CD8-positive, alpha-beta memory T cell (primary cell): ENCODE measurements at regions of chr14 and their contacts with region 1.

Region 1: GRCh38 chr14:49585803-49586672 is at the start of gene RPS29:
- DNase-seq: peak; percentile 94 to 99 (median 99)
- H3K4me3 ChIP-seq: peak within 1 kb of the TSS; percentile 84
- H3K4me3 Mint-ChIP-seq: peak within 1 kb of the TSS; percentile 87 to 96 (median 92)
- H3K27ac ChIP-seq: peak within 1 kb of the TSS; percentile 97
- H3K27ac Mint-ChIP-seq: peak within 1 kb of the TSS; percentile 92 to 100 (median 98)
- H3K4me1 ChIP-seq: peaks cover 36% of the 10 kb centered on the region
- H3K4me1 Mint-ChIP-seq: peaks cover 51 to 61% (median 52%) of the 10 kb centered on the region in 3 donors
- H3K27me3 ChIP-seq: no peaks in the 10 kb centered on the region
- H3K27me3 Mint-ChIP-seq: peaks cover 0 to 9% of the 10 kb centered on the region in 2 donors
- total RNA-seq, gene RPS29: 1,908 to 2,102 TPM

Region 2: GRCh38 chr14:49461529-49462401 is 124.3 kb before region 1 on chr14:
- CTCF ChIA-PET with region 1: interaction called, 12 read pairs
- POLR2A ChIA-PET with region 1: no interaction called
- DNase-seq: peak; percentile 37 to 71 (median 57)
- H3K4me3 ChIP-seq: no peak overlapping the region
- H3K4me3 Mint-ChIP-seq: no peak overlapping the region
- H3K27ac ChIP-seq: no peak overlapping the region
- H3K27ac Mint-ChIP-seq: peak overlapping the region in 1 of 8 donors; percentile 21
- H3K4me1 ChIP-seq: no peaks in the 10 kb centered on the region
- H3K4me1 Mint-ChIP-seq: no peaks in the 10 kb centered on the region
- H3K27me3 ChIP-seq: no peaks in the 10 kb centered on the region
- H3K27me3 Mint-ChIP-seq: peaks cover 2 to 12% of the 10 kb centered on the region in 2 donors

Region 3: GRCh38 chr14:49545073-49545472 is 41.0 kb before region 1 on chr14:
- CTCF ChIA-PET with region 1: no interaction called
- POLR2A ChIA-PET with region 1: no interaction called
- DNase-seq: no peak
- H3K4me3 ChIP-seq: no peak overlapping the region
- H3K4me3 Mint-ChIP-seq: no peak overlapping the region
- H3K27ac ChIP-seq: no peak overlapping the region
- H3K27ac Mint-ChIP-seq: no peak overlapping the region
- H3K4me1 ChIP-seq: no peaks in the 10 kb centered on the region
- H3K4me1 Mint-ChIP-seq: no peaks in the 10 kb centered on the region
- H3K27me3 ChIP-seq: no peaks in the 10 kb centered on the region
- H3K27me3 Mint-ChIP-seq: peaks cover 2 to 6% of the 10 kb centered on the region in 2 donors

Region 4: DNA sequence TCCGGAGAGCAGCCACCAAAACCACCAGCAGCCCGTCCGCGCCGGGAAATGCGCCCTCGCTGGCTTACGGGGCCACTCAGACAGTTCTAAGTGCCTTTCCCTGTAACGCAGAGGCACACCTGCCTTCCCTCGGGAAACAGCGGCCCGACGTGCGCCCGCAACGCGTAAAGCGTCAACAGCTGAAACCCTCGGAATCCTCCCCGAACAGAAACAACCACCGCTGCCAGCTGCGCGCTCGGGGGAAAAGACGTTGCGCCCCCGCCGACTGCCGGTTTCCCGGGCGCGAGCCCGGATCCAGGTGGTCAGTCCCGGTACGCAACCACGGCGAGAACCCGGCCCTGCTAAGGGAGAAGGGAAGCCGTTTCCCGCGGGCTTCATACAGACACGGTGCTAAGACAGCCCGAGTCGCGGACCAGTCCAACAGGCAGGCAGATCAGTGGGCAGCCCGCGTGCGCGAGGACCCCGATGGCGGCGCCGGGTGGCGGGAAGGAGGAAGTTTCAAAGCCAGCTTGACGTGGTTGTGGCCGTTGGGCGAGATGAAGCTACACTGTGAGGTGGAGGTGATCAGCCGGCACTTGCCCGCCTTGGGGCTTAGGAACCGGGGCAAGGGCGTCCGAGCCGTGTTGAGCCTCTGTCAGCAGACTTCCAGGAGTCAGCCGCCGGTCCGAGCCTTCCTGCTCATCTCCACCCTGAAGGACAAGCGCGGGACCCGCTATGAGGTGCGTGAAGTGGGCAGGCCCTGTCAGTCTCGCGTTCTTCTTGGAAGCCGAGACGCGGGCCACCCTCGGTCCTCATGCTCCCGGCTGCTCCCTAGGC is 12.7 kb after region 1 on chr14 and contains the start of gene LRR1:
- CTCF ChIA-PET with region 1: interaction called, 26 read pairs
- POLR2A ChIA-PET with region 1: interaction called, 46 read pairs
- DNase-seq: peak; percentile 77 to 91 (median 88)
- H3K4me3 ChIP-seq: peak within 1 kb of the TSS; percentile 99
- H3K4me3 Mint-ChIP-seq: peak within 1 kb of the TSS; percentile 93 to 100 (median 97)
- H3K27ac ChIP-seq: peak within 1 kb of the TSS; percentile 94
- H3K27ac Mint-ChIP-seq: peak within 1 kb of the TSS; percentile 94 to 99 (median 97)
- H3K4me1 ChIP-seq: peaks cover 10% of the 10 kb centered on the region
- H3K4me1 Mint-ChIP-seq: peaks cover 23 to 50% (median 36%) of the 10 kb centered on the region in 3 donors
- H3K27me3 ChIP-seq: no peaks in the 10 kb centered on the region
- H3K27me3 Mint-ChIP-seq: no peaks in the 10 kb centered on the region
- total RNA-seq, gene LRR1: 51.1 to 52.2 TPM

Region 5: GRCh38 chr14:49620182-49621113 is 34.4 kb after region 1 on chr14 and contains the starts of genes MGAT2 and RPL36AL:
- CTCF ChIA-PET with region 1: interaction called, 44 read pairs
- POLR2A ChIA-PET with region 1: interaction called, 82 read pairs
- DNase-seq: peak; percentile 91 to 96 (median 96)
- H3K4me3 ChIP-seq: peak within 1 kb of the TSS; percentile 80
- H3K4me3 Mint-ChIP-seq: peak within 1 kb of the TSS; percentile 94 to 99 (median 98)
- H3K27ac ChIP-seq: peak within 1 kb of the TSS; percentile 99
- H3K27ac Mint-ChIP-seq: peak within 1 kb of the TSS; percentile 98 to 100 (median 100)
- H3K4me1 ChIP-seq: peaks cover 50% of the 10 kb centered on the region
- H3K4me1 Mint-ChIP-seq: peaks cover 57 to 68% (median 65%) of the 10 kb centered on the region in 3 donors
- H3K27me3 ChIP-seq: no peaks in the 10 kb centered on the region
- H3K27me3 Mint-ChIP-seq: no peaks in the 10 kb centered on the region
- total RNA-seq, gene MGAT2: 57.7 to 60.2 TPM
- total RNA-seq, gene RPL36AL: 236 to 273 TPM

Region 6: DNA sequence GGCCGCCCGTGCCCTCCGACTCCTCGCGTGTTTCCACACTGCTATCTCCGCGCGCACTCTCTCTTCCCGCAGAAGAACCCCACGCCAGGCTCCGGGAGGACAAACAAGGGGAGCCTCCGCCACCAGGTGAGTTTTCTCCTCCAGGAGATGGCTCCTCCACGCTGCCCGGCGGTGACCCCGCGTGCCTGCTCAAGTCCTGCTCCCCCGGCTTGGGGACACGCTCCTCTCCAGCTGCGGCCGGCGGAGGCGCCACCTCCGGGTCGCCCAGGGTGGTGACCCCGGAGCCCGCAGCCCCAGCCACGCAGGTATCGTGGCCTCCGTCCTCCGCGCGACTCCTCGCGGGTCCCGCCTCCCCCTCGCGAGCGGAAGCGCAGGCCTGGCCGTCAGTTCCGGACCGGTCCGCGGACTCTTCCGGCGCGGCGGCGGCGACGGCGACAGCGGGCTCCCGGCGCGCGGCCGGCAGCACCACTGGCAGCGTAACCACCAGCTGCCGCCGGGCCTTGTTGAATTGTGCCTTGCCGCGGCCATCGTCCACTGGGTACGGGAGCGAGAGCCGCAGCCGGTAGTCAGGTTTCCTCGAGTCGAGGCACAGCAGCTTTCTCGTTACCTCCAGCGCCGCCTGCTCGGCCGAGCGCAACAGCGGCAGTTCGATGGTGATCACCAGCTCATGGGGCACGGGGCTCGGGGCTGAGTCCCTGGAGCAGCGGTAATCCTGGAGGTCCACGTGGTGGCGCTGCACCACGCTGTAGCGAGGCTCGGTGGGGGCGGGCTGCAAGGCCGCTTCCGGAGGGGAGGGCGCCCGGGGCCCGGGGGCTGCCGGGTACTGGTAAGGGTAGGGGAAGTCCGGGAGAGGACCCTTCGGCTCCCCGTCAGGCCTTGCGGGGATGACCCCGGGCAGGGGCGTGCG is 47.9 kb after region 1 on chr14:
- CTCF ChIA-PET with region 1: interaction called, 32 read pairs
- POLR2A ChIA-PET with region 1: interaction called, 28 read pairs
- DNase-seq: peak; percentile 90 to 96 (median 94)
- H3K4me3 ChIP-seq: peak overlapping the region; percentile 96
- H3K4me3 Mint-ChIP-seq: peak overlapping the region; percentile 92 to 100 (median 95)
- H3K27ac ChIP-seq: peak overlapping the region; percentile 99
- H3K27ac Mint-ChIP-seq: peak overlapping the region; percentile 91 to 100 (median 95)
- H3K4me1 ChIP-seq: peaks cover 32% of the 10 kb centered on the region
- H3K4me1 Mint-ChIP-seq: peaks cover 47 to 78% (median 60%) of the 10 kb centered on the region in 3 donors
- H3K27me3 ChIP-seq: no peaks in the 10 kb centered on the region
- H3K27me3 Mint-ChIP-seq: peaks cover 0 to 1% of the 10 kb centered on the region in 2 donors

Region 7: DNA sequence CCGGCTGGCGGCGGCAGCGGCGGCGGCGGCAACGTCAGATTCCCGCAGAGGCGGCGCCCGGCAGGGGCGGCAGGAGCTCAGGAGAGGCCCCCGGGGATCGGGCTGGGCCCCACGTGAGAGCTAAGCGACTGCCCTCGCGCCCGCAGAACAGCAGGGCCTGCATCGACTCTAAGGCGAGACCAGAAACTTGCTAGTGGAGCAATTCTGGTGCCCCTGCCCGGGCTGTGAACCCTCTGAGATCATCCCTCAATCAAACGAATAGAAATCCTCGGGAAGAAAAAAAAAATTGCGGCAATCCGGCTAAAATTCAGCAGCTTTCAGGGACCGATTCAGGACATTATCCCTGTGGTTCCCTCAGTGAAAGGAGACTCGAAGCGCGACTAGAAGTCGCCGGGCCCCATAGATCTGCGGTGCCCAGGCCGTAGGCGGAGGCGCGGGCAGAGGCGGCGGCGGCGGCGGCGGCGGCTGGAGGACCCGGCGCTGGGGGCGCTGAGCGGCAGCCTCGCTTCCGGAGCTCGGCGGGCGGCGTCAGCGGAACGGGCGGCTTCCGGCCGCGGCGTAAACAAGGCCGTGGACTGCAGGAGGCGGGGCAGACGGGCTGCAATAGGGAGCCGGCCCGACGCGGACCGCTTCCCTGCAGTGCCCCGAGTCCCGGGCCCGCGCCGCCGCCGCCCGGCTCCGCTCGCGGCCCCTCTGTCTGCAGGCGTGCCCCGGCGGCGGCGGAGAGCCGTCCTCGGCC is 181.7 kb after region 1 on chr14 and contains the start of gene KLHDC2:
- CTCF ChIA-PET with region 1: interaction called, 20 read pairs
- POLR2A ChIA-PET with region 1: interaction called, 19 read pairs
- DNase-seq: peak; percentile 83 to 91 (median 89)
- H3K4me3 ChIP-seq: peak within 1 kb of the TSS; percentile 99
- H3K4me3 Mint-ChIP-seq: peak within 1 kb of the TSS; percentile 96 to 99 (median 98)
- H3K27ac ChIP-seq: peak within 1 kb of the TSS; percentile 98
- H3K27ac Mint-ChIP-seq: peak within 1 kb of the TSS; percentile 98 to 100 (median 99)
- H3K4me1 ChIP-seq: peaks cover 28% of the 10 kb centered on the region
- H3K4me1 Mint-ChIP-seq: peaks cover 30 to 43% (median 42%) of the 10 kb centered on the region in 3 donors
- H3K27me3 ChIP-seq: no peaks in the 10 kb centered on the region
- H3K27me3 Mint-ChIP-seq: peaks cover 0 to 3% of the 10 kb centered on the region in 2 donors
- total RNA-seq, gene KLHDC2: 28.9 to 29.0 TPM